GM13977 (cell line): ENCODE measurements at regions of chr3 and their contacts with region 1.

Region 1: GRCh38 chr3:193788189-193788991 is 195.4 kb downstream of the OPA1 start:
- DNase-seq: peak; percentile 85
- CTCF ChIP-seq: peak; percentile 83

Region 2: GRCh38 chr3:194134757-194135528 is 346.6 kb after region 1 on chr3:
- in situ Hi-C with region 1: loop called (anchors 5 kb)
- DNase-seq: peak; percentile 89
- CTCF ChIP-seq: no peak